ENCODE measurements at regions of chr3 and their contacts with region 1.

Region 1: GRCh38 chr3:16056210-16056607 is 118.3 kb upstream of the GALNT15 start:
- DNase-seq: peak in 1 of 5 donors; percentile 23
- H3K4me3 ChIP-seq: no peak overlapping the region
- H3K27ac ChIP-seq: peak overlapping the region; percentile 44 to 86
- H3K4me1 ChIP-seq: peaks cover 23% of the 10 kb centered on the region
- H3K27me3 ChIP-seq: no peaks in the 10 kb centered on the region
- CTCF ChIP-seq: no peak
- EP300 ChIP-seq: peak; percentile 79
- POLR2A ChIP-seq: no peak

Region 2: DNA sequence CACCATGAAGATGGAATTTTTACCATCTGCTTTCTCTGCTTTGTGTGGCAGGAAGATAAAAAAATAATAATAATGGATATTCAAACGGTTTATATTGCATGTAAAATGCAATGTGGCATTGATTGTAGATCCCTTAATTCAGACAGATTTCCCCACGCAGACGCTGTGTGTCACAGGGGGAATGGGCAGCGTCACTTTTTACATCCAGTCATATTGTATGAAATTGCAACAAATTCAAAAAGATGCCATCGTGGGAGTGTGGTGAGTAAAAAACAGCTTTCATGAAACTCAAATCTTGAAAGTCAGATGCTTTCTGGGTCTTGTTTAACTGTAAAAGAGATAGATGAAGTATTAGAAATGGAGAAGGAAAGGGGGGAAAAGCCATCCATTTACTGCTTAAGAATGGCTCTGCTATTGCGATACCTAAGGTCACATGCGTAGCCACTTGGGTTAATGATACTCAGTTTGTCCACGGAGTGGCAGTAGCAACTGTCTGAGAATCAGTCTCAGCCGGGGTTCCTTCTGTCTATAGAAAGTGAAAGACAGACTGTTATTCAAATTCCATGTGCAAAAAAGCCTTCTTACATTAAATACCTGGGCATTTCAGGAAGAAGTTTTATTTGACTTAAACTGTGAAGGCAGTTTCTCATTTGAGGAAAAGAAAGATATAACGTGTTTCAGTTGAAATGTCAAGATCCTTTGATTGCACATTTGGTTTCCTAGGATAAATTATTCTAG is 426.2 kb before region 1 on chr3:
- intact Hi-C with region 1: loop called in 1 of 4 experiments (anchors 10 kb)
- DNase-seq: peak in 3 of 5 donors; percentile 42 to 72 (median 55)
- H3K4me3 ChIP-seq: no peak overlapping the region
- H3K27ac ChIP-seq: peak overlapping the region in 1 of 2 donors; percentile 51
- H3K4me1 ChIP-seq: peaks cover 5% of the 10 kb centered on the region
- H3K27me3 ChIP-seq: no peaks in the 10 kb centered on the region
- CTCF ChIP-seq: peak; percentile 55 to 79 (median 76)
- EP300 ChIP-seq: no peak
- POLR2A ChIP-seq: no peak

Region 3: GRCh38 chr3:15820911-15821310 is 235.3 kb before region 1 on chr3:
- intact Hi-C with region 1: loop called in 1 of 4 experiments (anchors 10 kb)
- DNase-seq: no peak
- H3K4me3 ChIP-seq: no peak overlapping the region
- H3K27ac ChIP-seq: peak overlapping the region in 1 of 2 donors; percentile 9
- H3K4me1 ChIP-seq: peaks cover 9% of the 10 kb centered on the region
- H3K27me3 ChIP-seq: no peaks in the 10 kb centered on the region
- CTCF ChIP-seq: no peak
- EP300 ChIP-seq: no peak
- POLR2A ChIP-seq: no peak

Region 4: GRCh38 chr3:16130066-16130465 is 73.9 kb after region 1 on chr3:
- intact Hi-C with region 1: loop called in 1 of 4 experiments (anchors 10 kb)
- DNase-seq: no peak
- H3K4me3 ChIP-seq: no peak overlapping the region
- H3K27ac ChIP-seq: no peak overlapping the region
- H3K4me1 ChIP-seq: peaks cover 11% of the 10 kb centered on the region
- H3K27me3 ChIP-seq: no peaks in the 10 kb centered on the region
- CTCF ChIP-seq: no peak
- EP300 ChIP-seq: no peak
- POLR2A ChIP-seq: no peak

Region 5: GRCh38 chr3:16240283-16241023 is 184.2 kb after region 1 on chr3:
- intact Hi-C with region 1: loop called in 3 of 4 experiments (anchors 5 kb)
- DNase-seq: peak in 1 of 5 donors; percentile 55
- H3K4me3 ChIP-seq: no peak overlapping the region
- H3K27ac ChIP-seq: peak overlapping the region in 1 of 2 donors; percentile 67
- H3K4me1 ChIP-seq: peaks cover 15% of the 10 kb centered on the region
- H3K27me3 ChIP-seq: no peaks in the 10 kb centered on the region
- CTCF ChIP-seq: no peak
- EP300 ChIP-seq: peak; percentile 84
- POLR2A ChIP-seq: no peak

Measured in ovary (tissue), 10 donors.